Mucosa of descending colon (tissue), 3 donors: ENCODE measurements at regions of chr15 and their contacts with region 1.

Region 1: GRCh38 chr15:98518823-98519561 is 129.3 kb upstream of the IGF1R start:
- DNase-seq: peak in 2 of 3 donors; percentile 32 to 68
- ATAC-seq: peak; percentile 82
- H3K4me3 ChIP-seq: no peak overlapping the region
- H3K4me1 ChIP-seq: no peaks in the 10 kb centered on the region
- CTCF ChIP-seq: peak; percentile 28

Region 2: GRCh38 chr15:98647774-98648653 is 129.0 kb after region 1 on chr15 and contains the start of gene IGF1R:
- intact Hi-C with region 1: loop called in 1 of 2 experiments (anchors 5 kb)
- DNase-seq: peak; percentile 87 to 94 (median 89)
- ATAC-seq: peak; percentile 89
- H3K4me3 ChIP-seq: peak within 1 kb of the TSS; percentile 54
- H3K4me1 ChIP-seq: peaks cover 5% of the 10 kb centered on the region
- CTCF ChIP-seq: no peak
- total RNA-seq, gene IGF1R: 34.7 to 65.2 (median 47.7) TPM